Activated naive CD4-positive, alpha-beta T cell treated with anti-CD3 and anti-CD28 coated beads, Interleukin-2, amount 10 ng/mL, durations not matched to agents 7 days and 5 days (primary cell): ENCODE measurements at regions of chr11 and their contacts with region 1.

Region 1: GRCh38 chr11:117946842-117947526 is 17.8 kb upstream of the TMPRSS13 start:
- DNase-seq: peak; percentile 86
- H3K4me3 Mint-ChIP-seq: no peak overlapping the region
- H3K27ac Mint-ChIP-seq: peak overlapping the region; percentile 53
- H3K4me1 Mint-ChIP-seq: peaks cover 85% of the 10 kb centered on the region
- H3K27me3 Mint-ChIP-seq: peaks cover 11% of the 10 kb centered on the region

Region 2: GRCh38 chr11:117426269-117426685 is 520.7 kb before region 1 on chr11:
- CTCF ChIA-PET with region 1: interaction called, 19 read pairs
- DNase-seq: peak; percentile 75
- H3K4me3 Mint-ChIP-seq: no peak overlapping the region
- H3K27ac Mint-ChIP-seq: no peak overlapping the region
- H3K4me1 Mint-ChIP-seq: no peaks in the 10 kb centered on the region
- H3K27me3 Mint-ChIP-seq: peaks cover 18% of the 10 kb centered on the region

Region 3: DNA sequence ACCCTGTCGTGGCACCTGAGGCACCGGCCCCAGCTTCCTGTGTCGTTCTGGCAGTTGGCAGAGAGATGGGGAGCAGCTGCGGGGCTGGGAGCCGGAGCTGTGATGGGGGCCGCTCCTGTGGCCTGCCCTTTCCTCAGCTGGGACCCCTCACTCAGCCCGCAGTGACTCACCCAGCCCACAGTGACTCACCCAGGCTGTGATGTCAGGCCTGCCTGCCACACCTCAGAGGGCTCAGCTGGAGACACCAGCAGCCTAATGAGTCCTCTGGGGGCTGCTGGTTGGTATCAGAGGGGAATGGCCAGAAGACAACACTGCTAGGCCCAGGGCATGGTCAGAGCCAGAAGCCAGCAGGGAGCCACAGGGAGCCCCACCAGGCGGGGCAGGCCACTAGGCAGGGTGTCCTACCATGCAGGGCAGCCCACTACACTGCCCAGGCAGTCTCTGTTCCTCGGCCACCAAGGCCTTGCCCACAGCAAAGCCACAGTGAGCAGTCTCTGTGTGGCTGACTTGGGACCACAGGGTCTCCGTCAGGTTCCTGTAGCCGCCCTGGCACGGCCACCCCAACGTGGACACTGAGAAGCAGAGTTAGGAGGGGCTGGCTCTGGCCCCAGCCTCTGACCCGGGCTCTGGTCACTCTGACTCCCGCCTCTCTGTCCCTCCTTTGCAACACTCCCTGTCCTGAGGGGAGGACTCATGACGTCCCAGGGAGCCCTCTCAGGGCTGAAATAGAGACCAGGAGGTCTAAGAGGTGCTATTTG is 118.2 kb before region 1 on chr11:
- CTCF ChIA-PET with region 1: interaction called, 137 read pairs
- DNase-seq: peak; percentile 76
- H3K4me3 Mint-ChIP-seq: no peak overlapping the region
- H3K27ac Mint-ChIP-seq: peak overlapping the region; percentile 3
- H3K4me1 Mint-ChIP-seq: peaks cover 58% of the 10 kb centered on the region
- H3K27me3 Mint-ChIP-seq: peaks cover 44% of the 10 kb centered on the region

Region 4: DNA sequence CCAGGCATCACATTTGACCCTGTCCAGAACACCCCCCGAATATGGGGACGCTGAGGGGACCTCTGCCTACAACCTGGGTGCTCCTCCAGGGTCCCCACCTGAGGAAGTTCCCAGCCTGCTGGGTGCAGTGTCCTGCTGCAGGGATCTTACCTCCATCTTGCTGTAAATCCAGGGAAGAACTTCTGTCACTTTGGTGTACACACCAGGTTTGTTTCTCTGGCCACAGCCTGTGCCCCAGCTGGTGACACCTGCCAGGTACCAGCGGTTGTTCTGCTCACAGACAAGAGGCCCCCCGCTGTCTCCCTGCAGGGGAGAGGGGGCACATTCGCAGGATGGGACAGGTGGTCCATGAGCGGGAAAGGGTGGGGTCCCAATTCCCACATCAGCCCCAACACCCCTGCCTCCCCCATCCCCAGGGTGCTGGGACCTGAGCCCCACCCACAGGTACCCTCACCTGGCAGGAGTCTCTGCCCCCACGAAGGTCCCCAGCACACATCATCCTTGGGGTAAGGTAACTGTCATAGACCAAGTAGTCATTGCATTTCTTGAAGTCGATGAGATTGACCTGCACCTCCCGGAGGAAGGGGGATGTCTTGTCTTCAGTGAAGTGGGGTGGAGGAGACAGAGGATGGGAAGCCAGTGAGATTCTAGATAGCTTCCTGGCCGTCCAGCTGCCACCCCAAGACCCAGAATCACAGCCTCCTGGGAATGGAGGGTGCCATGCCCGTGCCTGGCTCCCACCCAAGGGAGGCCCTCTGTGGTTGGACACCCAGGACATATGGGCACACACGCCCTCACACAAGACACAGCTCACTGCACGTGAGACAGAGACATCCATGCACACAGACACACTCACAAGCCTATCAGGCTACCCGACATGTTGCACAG is 43.2 kb before region 1 on chr11:
- CTCF ChIA-PET with region 1: interaction called, 12 read pairs
- DNase-seq: peak; percentile 13
- H3K4me3 Mint-ChIP-seq: no peak overlapping the region
- H3K27ac Mint-ChIP-seq: no peak overlapping the region
- H3K4me1 Mint-ChIP-seq: peaks cover 13% of the 10 kb centered on the region
- H3K27me3 Mint-ChIP-seq: peaks cover 40% of the 10 kb centered on the region

Region 5: DNA sequence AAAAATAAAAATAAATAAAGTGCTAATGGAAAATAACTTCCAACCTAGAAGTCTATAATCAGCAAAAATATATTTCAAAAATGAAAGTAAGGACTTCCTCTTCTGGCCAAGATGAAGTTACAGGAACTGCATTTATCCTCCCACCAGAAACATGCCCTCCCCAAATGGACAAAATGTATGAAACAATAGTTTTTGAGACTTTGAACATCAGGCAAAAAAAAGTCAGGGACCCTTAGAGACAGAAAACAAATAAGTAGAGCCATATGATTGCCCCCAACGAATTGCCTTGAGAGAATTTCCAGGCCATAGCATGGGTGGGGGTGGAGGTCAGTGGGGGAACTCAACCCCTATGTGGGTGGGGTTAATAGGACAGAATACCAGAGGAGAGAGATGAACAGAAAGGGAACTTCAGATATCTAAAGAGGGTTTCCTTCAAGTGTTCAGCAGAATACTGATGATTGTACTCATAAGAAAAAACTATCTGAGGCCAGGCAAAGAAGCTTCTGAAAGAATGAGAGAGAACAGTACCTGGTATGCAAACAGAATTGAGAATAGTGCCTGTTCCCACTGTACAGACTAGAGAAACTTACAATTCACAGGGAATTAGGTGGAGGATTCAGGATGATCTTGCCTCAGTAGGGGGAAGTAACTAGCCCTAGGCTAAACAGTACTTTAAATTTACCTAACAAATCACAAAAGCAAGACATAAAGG is 12.6 kb after region 1 on chr11:
- CTCF ChIA-PET with region 1: interaction called, 14 read pairs
- DNase-seq: no peak
- H3K4me3 Mint-ChIP-seq: no peak overlapping the region
- H3K27ac Mint-ChIP-seq: peak overlapping the region; percentile 3
- H3K4me1 Mint-ChIP-seq: peaks cover 37% of the 10 kb centered on the region
- H3K27me3 Mint-ChIP-seq: no peaks in the 10 kb centered on the region

Region 6: DNA sequence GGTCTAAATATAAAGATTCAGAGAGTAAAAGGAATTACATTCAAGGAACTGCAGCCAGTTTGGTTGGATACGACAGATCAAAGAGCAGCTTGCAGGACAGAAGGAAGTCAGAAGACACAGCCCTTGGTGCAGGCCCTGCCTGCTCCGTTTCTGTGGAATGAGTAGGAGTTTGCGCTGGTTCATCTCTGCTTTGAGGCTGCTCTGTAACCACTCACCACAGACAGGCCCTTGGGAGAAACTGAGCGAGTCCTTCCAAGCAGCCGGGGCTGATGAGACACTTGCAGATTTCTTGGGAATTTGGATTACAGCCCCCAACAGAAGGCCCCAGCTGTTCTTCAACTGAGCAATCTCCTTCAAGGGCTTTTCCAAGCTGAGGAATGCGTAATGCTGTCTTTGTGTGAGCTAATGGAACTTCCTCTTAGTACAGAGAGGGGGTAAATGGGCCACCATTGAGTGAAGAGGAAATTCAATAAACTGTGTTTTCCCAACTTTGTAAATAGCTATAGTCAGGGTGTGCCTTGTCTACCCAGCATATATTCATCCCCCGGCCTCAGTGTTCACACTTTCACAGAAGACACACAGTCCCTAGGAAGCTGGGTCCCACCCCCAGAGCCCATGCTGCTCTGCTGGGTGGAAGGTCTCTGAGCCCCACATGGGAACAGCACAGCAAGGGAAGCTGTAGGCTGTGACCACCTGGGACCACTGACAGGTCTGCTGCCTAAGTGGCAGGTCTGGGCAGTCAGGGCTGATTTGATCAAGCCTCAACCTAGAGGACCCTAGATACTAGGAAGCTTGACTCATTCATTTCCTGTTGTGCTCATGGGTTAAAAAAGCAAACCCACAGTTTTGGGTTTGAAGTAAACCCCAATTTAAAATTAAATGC is 55.8 kb after region 1 on chr11:
- CTCF ChIA-PET with region 1: interaction called, 17 read pairs
- DNase-seq: peak; percentile 64
- H3K4me3 Mint-ChIP-seq: peak overlapping the region; percentile 56
- H3K27ac Mint-ChIP-seq: peak overlapping the region; percentile 98
- H3K4me1 Mint-ChIP-seq: peaks cover 100% of the 10 kb centered on the region
- H3K27me3 Mint-ChIP-seq: no peaks in the 10 kb centered on the region

Region 7: DNA sequence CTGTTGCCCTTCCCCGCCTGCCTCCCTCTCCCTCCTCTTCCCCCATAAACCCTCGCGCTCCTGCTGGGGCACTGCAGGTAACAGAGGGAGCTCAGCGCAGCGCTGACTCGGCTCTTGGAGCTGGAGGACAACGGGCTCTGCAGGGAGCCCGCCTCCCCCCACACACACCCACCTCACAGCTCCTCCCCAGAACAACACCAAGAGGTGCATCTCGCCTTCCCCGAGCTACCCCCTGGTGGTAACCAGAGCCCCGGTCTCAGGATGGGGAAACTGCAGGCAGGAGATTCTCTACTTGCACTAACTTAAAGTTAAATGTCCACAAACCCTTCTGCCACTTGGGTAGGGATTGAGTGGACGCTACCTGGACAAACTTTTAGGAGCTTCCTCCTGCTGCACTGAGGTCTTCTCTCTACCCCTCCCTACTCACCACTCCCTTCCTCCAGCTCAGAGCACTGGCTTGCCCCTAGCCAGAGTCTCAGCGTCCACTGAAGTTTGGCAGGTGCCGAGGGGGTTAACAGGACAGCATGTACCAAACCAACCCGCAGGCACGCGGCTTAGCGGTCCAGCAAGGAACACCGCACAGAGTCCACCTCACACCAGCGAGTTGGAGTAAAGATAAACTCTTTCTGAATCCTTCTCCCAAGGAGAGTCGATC is 209.7 kb after region 1 on chr11:
- CTCF ChIA-PET with region 1: no interaction called
- DNase-seq: peak; percentile 45
- H3K4me3 Mint-ChIP-seq: no peak overlapping the region
- H3K27ac Mint-ChIP-seq: no peak overlapping the region
- H3K4me1 Mint-ChIP-seq: peaks cover 15% of the 10 kb centered on the region
- H3K27me3 Mint-ChIP-seq: peaks cover 100% of the 10 kb centered on the region